G401 (cell line): ENCODE measurements at regions of chr15 and their contacts with region 1.

Region 1: GRCh38 chr15:84833447-84834228 is 16.5 kb downstream of the ALPK3 start:
- DNase-seq: no peak

Region 2: GRCh38 chr15:84894442-84895361 is 61.1 kb after region 1 on chr15:
- in situ Hi-C with region 1: loop called (anchors 10 kb)
- DNase-seq: no peak

Region 3: DNA sequence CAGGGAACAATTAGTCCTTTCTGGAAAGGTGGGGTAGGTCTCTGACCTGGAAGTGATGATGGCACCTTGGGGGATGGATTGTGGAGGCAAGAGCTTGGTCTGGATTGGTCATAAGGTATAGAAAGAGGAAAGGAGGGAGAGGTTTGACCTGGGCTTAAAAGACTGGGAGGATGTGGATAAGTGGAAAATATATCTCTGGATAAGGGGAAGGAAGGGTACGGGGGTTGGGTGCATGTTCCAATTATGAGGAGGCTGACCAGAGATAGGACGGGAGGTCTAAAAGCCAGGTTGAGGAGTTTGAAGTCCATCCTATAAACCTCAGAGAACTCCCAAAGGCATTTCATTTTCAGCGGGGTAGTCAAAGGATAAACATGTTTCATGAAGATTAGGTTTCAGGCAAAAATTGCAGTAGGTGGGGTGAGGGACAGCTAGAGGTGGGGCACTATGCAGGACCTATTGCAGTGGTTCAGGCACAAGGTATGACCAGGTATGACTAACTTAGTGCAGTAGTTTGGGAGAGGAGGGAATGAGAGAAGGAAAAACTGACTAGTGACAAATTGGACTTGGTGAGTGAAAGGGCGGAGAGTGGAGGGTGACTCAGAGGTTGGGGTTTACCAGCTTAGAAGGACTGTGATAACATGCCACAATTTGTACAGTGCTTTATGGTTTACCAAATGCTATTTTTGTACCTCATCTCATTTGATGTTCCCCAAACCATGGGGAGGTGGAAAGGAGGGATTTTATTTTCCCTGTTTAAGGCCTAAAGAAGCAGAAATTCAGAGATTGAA is 158.7 kb after region 1 on chr15:
- in situ Hi-C with region 1: no loop called
- DNase-seq: no peak

Region 4: DNA sequence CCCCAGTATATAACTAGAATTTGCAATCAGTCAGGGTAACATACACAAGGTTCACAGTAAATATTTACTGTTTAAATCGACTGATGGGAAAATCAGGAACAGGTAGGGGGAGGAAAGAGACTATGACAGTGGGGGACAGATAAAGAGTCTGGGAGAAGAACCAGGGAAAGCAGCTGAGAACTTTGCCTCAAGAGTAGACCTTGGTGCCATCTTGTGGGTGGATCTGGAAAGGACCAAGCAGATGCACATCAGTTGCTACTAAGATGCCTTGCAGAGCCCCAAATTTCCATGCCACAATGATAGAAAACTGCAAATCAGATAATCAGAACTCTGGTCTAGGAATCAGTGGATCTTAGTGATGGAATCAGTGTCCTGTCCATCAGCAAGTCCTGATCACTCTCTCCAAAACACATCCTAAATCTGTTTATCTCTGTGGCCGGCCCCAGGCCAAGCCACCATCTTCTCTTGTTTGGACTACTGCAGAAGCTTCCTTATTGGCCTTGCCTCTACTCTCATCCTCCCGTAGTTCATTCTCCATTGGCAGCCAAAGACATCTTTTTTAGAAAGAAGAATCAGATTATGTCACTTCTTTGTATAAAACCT is 210.7 kb after region 1 on chr15:
- in situ Hi-C with region 1: loop called (anchors 10 kb)
- DNase-seq: peak; percentile 55